Ovary (tissue), 10 donors: ENCODE measurements at regions of chr17 and their contacts with region 1.

Region 1: DNA sequence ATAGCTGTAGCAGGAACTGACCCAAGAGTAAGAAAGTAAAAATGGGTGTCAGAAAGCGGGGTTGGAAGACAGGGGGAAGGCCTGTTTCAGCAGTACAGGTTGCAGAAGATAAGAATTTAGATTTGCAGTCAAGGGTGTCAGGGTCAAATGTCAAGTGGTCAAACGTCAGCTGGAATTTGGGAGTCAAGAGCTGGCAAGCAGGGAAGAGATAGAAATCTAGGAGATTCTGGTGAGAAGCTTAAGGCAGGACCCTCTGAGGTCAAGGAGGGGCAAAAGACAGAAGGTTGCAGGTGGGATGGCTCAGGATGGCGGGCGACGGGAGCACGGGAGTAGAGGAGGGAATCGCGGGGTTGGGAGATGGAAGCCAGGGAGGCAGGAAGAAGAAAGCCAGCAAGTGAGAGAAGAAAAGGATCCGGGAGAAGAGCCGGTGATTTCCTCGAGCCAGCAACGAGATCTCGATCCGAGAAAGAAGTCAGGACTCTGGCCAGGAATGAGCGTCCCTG is 335 bp downstream of the SLC25A35 start:
- DNase-seq: no peak
- H3K4me3 ChIP-seq: peak overlapping the region; percentile 74
- H3K27ac ChIP-seq: peak overlapping the region in 1 of 2 donors; percentile 43
- H3K4me1 ChIP-seq: no peaks in the 10 kb centered on the region
- H3K27me3 ChIP-seq: no peaks in the 10 kb centered on the region
- CTCF ChIP-seq: no peak
- EP300 ChIP-seq: no peak
- POLR2A ChIP-seq: no peak

Region 2: DNA sequence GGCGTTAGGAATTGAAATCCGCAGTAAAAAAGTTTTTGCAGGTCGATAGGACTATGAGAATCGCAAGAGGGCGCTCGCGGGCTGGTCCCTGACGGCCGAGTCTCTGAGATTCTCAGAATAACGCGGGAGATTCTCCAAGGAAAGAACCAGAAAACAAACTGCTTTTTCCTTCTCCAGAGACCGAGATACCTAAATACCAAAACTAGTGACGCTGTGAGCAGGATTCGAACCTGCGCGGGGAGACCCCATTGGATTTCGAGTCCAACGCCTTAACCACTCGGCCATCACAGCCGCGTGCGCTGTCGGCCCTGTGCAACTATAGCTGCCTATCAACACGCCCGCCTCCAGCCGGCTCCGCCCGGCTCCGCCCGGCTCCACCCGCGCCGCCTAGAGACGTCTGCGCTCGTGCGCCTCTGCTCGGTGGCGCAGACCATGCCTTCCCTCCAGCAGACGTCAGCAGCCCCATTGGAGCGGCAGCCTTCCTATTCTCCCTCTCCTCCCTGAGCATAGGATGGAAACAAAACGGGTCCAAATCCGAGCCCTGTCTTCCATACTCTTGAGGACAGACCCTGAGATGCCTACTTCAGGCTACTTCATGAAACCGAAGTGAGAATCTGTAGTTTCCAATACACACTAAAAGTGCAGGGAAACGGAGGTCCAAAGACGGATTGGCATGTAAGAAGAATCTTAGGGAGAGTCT is 156.0 kb before region 1 on chr17:
- intact Hi-C with region 1: loop called in 1 of 4 experiments (anchors 5 kb)
- DNase-seq: peak; percentile 93 to 98 (median 96)
- H3K4me3 ChIP-seq: peak overlapping the region; percentile 0
- H3K27ac ChIP-seq: peak overlapping the region; percentile 49 to 84
- H3K4me1 ChIP-seq: no peaks in the 10 kb centered on the region
- H3K27me3 ChIP-seq: no peaks in the 10 kb centered on the region
- CTCF ChIP-seq: peak; percentile 90 to 96 (median 95)
- EP300 ChIP-seq: no peak
- POLR2A ChIP-seq: peak; percentile 38

Region 3: GRCh38 chr17:8255499-8255898 is 39.4 kb before region 1 on chr17:
- intact Hi-C with region 1: no loop called
- DNase-seq: no peak
- H3K4me3 ChIP-seq: no peak overlapping the region
- H3K27ac ChIP-seq: no peak overlapping the region
- H3K4me1 ChIP-seq: no peaks in the 10 kb centered on the region
- H3K27me3 ChIP-seq: no peaks in the 10 kb centered on the region
- CTCF ChIP-seq: no peak
- EP300 ChIP-seq: no peak
- POLR2A ChIP-seq: no peak